ENCODE measurements at regions of chr3 and their contacts with region 1.

Region 1: DNA sequence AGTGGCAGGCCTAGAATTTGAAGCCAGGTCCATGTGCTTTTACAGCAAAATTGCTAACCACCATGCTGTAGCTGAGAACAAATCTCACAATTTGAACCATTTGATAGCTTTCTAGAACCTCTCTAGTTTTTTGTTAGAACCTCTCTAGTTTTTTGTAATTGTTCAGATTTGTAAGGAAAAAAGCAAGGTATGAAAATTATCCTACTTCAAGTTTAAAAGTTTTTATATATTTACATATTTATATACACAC is 9.8 kb downstream of the GXYLT2 start:
- DNase-seq: no peak
- H3K4me3 Mint-ChIP-seq: no peak overlapping the region
- H3K27ac Mint-ChIP-seq: no peak overlapping the region
- H3K4me1 Mint-ChIP-seq: no peaks in the 10 kb centered on the region
- H3K27me3 Mint-ChIP-seq: peaks cover 17% of the 10 kb centered on the region

Region 2: GRCh38 chr3:72462595-72463011 is 435.1 kb before region 1 on chr3:
- intact Hi-C with region 1: no loop called
- DNase-seq: no peak
- H3K4me3 Mint-ChIP-seq: no peak overlapping the region
- H3K27ac Mint-ChIP-seq: no peak overlapping the region
- H3K4me1 Mint-ChIP-seq: peaks cover 12% of the 10 kb centered on the region
- H3K27me3 Mint-ChIP-seq: no peaks in the 10 kb centered on the region

Region 3: DNA sequence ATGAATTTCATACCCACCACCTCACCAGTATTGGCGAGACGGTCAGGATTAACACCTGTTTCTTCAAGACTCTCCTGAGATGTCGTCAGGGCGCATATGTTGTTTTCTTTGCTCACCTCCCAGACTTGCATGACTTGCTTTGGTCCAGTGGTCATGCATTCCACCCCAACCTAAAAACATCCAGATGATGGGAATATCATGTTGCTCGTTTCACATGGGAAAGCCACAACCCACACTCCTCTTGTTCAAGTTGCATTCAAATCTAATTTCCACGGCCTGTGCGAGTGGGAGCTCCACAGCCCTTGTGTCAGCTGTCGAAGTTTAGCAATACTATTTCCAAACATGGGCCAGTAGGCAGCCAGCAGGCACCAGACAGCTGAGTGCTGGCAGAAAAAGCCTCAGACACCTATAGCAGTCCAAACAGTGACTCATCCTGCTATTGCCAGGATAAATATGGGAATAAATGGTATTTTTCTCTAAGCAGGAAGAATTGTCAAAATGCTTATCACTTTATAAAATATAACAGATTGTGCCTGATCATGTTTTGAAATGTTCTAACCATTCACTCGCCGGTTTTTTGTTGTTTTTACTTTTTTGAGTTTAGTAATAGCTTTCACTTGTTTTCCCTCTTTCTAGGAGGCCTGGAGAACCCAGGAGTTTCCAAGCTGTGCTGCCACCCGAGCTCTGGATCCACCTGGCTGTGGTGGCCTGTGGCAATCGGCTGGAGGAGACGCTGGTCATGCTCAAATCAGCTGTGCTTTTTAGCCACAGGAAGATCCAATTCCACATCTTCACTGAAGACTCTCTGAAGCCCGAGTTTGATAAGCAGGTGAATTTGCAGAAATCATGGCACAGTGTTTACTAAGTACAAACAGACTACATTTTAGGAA is 10.3 kb after region 1 on chr3:
- intact Hi-C with region 1: loop called (anchors 1 kb)
- DNase-seq: no peak
- H3K4me3 Mint-ChIP-seq: no peak overlapping the region
- H3K27ac Mint-ChIP-seq: no peak overlapping the region
- H3K4me1 Mint-ChIP-seq: no peaks in the 10 kb centered on the region
- H3K27me3 Mint-ChIP-seq: peaks cover 7% of the 10 kb centered on the region

Measured in activated T-helper 2 cell treated with anti-CD3 and anti-CD28 coated beads, Interferon-gamma antibody, Interleukin-2, Interleukin-4, amounts not matched to agents 10 μg/mL and 5 μg/mL and 100 μg/mL, durations not matched to agents 14 hours and 24 hours and 36 hours (primary cell).